ENCODE measurements at regions of chr5 and their contacts with region 1.

Region 1: GRCh38 chr5:149561848-149562247 is 10.6 kb upstream of the CSNK1A1 start:
- DNase-seq: peak; percentile 91
- H3K4me3 ChIP-seq: peak overlapping the region in 1 of 3 experiments; percentile 54
- H3K27ac ChIP-seq: peak overlapping the region; percentile 71
- H3K4me1 ChIP-seq: peaks cover 39% of the 10 kb centered on the region
- H3K27me3 ChIP-seq: no peaks in the 10 kb centered on the region
- CTCF ChIP-seq: no peak
- POLR2A ChIP-seq: peak; percentile 37

Region 2: DNA sequence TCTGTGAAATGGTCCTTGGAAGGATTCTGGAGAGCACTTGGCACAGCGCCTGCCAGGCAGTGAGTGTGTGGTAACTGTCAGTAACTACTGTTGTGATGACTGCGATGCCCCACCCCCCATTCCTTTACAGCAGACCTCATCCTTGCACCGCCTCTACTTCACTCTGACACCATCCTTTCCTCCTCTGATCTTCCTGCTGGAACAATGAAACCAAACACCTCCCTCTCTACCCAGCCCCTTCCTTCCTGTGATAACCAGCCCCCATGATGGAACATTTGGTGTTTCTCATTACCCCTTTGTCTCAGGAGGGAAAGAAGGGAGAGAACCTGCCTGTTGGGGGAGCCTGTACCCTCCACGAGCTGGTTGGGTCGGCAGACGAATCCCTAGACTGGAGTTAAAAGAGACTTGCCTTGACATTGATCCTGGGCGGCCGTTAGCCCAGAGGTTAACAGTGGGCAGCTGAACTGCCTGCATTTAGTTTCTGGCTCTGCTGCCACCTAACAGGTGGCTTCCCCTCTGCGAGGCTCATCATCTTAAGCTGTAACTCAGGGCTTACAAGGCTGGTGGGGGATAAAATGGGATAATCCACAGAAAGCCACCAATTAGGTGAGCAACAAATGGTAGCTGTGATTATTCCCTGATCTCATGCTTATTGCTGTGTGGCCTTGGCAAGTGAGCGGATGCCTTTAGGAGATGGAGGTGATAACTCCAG is 250.7 kb before region 1 on chr5:
- CTCF ChIA-PET with region 1: interaction called, 4 read pairs
- POLR2A ChIA-PET with region 1: no interaction called
- dilution Hi-C with region 1: no loop called
- intact Hi-C with region 1: loop called (anchors 2 kb)
- DNase-seq: peak; percentile 78
- H3K4me3 ChIP-seq: no peak overlapping the region
- H3K27ac ChIP-seq: peak overlapping the region; percentile 77
- H3K4me1 ChIP-seq: peaks cover 23% of the 10 kb centered on the region
- H3K27me3 ChIP-seq: no peaks in the 10 kb centered on the region
- CTCF ChIP-seq: no peak
- POLR2A ChIP-seq: no peak

Region 3: DNA sequence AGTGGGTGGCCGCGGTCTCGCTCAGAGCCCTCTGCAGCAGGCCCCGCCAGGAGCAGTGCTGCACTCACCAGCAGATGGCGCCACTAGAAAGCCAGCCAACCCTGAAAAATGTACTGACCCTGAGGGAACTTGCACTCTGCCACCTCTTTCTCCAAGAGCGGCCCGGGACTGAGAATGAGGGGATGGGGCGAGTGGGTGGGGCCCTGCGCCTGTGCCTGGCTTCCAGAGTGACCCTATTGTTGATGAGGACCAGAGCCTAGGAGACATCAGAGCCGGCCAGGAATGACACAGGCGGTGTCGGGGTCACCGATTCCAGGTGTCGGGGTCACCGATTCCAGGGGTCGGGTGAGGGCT is 179.9 kb before region 1 on chr5:
- CTCF ChIA-PET with region 1: interaction called, 40 read pairs
- POLR2A ChIA-PET with region 1: no interaction called
- dilution Hi-C with region 1: no loop called
- intact Hi-C with region 1: loop called (anchors 1 kb)
- DNase-seq: peak; percentile 60
- H3K4me3 ChIP-seq: no peak overlapping the region
- H3K27ac ChIP-seq: no peak overlapping the region
- H3K4me1 ChIP-seq: no peaks in the 10 kb centered on the region
- H3K27me3 ChIP-seq: no peaks in the 10 kb centered on the region
- CTCF ChIP-seq: peak; percentile 86 to 97
- POLR2A ChIP-seq: no peak

Region 4: DNA sequence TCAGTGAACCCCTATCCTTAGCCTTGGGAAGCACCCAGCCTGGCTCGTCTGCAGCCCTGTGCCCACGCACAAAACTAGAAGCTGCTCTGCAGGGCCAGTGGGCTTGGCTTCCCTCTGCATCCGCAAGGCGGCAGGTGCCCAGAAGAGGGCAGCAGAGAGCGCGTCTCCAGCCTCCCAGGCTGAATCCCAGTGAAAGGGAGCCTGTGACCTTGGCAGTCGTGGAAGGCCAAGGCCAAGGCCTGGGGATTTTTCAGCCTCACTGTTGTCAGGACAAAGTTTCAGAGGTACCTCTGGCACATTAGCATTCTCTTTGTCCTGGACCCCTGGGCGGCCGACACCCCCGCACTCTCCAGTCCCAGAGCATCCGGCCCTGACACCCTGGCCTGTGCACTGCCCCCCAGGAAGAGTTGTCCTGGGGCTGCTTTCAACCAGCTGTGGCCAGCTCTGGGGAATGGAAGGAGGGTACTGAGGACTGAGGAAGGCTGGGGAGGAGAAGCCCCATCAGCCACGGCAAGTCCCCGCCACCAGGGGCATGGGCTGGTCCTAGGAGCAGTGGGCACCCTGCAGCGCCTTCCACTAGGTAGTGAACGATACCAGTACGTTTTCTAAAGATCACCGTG is 119.2 kb before region 1 on chr5:
- CTCF ChIA-PET with region 1: interaction called, 39 read pairs
- POLR2A ChIA-PET with region 1: no interaction called
- dilution Hi-C with region 1: no loop called
- intact Hi-C with region 1: loop called (anchors 1 kb)
- DNase-seq: peak; percentile 83
- H3K4me3 ChIP-seq: no peak overlapping the region
- H3K27ac ChIP-seq: no peak overlapping the region
- H3K4me1 ChIP-seq: peaks cover 27% of the 10 kb centered on the region
- H3K27me3 ChIP-seq: no peaks in the 10 kb centered on the region
- CTCF ChIP-seq: peak; percentile 93 to 94
- POLR2A ChIP-seq: no peak

Region 5: DNA sequence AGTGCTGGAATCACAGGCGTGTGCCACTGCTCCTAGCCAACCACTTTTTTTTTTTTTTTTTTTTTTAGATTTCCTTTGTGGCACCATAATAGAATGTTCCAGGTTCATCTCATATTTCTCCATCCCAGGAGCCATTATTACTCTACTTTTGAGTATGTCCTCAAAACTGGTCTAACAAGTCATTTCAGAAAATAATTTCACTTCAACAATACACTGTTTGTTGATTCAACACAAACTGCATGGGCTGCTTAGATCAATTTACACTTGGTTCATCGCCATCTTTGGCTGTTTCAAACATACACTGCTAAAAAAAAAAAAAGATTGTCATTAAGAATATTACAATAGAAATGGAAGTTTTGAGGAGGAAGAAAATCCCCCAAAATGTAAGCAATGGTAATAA is 68.5 kb before region 1 on chr5:
- CTCF ChIA-PET with region 1: interaction called, 10 read pairs
- POLR2A ChIA-PET with region 1: no interaction called
- dilution Hi-C with region 1: no loop called
- intact Hi-C with region 1: no loop called
- DNase-seq: no peak
- H3K4me3 ChIP-seq: no peak overlapping the region
- H3K27ac ChIP-seq: no peak overlapping the region
- H3K4me1 ChIP-seq: no peaks in the 10 kb centered on the region
- H3K27me3 ChIP-seq: no peaks in the 10 kb centered on the region
- CTCF ChIP-seq: no peak
- POLR2A ChIP-seq: no peak

Region 6: DNA sequence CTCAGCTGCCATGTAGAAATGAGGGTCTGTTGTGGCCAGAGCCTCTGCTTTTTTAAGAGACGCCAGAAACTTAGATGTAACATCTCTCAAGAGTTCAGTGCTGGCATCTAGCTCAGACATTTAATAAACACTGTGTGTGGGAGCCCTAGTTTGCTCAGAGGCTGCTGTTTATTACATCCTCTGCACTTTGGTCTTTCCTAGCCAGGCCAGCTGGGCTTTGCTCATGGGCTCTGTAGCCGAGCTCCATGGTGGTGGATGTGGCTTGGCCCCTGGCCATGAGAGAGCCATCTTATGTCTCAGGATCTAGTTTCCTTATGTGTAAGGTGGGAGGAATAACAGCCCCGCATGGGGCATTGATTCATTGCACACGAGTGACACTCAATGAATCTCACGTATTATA is 49.5 kb after region 1 on chr5:
- CTCF ChIA-PET with region 1: interaction called, 71 read pairs
- POLR2A ChIA-PET with region 1: no interaction called
- dilution Hi-C with region 1: no loop called
- intact Hi-C with region 1: no loop called
- DNase-seq: no peak
- H3K4me3 ChIP-seq: no peak overlapping the region
- H3K27ac ChIP-seq: no peak overlapping the region
- H3K4me1 ChIP-seq: no peaks in the 10 kb centered on the region
- H3K27me3 ChIP-seq: no peaks in the 10 kb centered on the region
- CTCF ChIP-seq: no peak
- POLR2A ChIP-seq: no peak